ENCODE measurements at regions of chr18 and their contacts with region 1.

Region 1: GRCh38 chr18:54269893-54270844 is 852 bp downstream of the POLI start:
- DNase-seq: no peak
- H3K4me3 Mint-ChIP-seq: peak overlapping the region; percentile 85
- H3K27ac Mint-ChIP-seq: peak overlapping the region; percentile 97
- H3K4me1 Mint-ChIP-seq: peaks cover 26% of the 10 kb centered on the region
- H3K27me3 Mint-ChIP-seq: no peaks in the 10 kb centered on the region

Region 2: GRCh38 chr18:54086046-54086802 is 183.9 kb before region 1 on chr18:
- intact Hi-C with region 1: no loop called
- DNase-seq: peak; percentile 14
- H3K4me3 Mint-ChIP-seq: peak overlapping the region; percentile 18
- H3K27ac Mint-ChIP-seq: peak overlapping the region; percentile 49
- H3K4me1 Mint-ChIP-seq: peaks cover 32% of the 10 kb centered on the region
- H3K27me3 Mint-ChIP-seq: no peaks in the 10 kb centered on the region

Region 3: DNA sequence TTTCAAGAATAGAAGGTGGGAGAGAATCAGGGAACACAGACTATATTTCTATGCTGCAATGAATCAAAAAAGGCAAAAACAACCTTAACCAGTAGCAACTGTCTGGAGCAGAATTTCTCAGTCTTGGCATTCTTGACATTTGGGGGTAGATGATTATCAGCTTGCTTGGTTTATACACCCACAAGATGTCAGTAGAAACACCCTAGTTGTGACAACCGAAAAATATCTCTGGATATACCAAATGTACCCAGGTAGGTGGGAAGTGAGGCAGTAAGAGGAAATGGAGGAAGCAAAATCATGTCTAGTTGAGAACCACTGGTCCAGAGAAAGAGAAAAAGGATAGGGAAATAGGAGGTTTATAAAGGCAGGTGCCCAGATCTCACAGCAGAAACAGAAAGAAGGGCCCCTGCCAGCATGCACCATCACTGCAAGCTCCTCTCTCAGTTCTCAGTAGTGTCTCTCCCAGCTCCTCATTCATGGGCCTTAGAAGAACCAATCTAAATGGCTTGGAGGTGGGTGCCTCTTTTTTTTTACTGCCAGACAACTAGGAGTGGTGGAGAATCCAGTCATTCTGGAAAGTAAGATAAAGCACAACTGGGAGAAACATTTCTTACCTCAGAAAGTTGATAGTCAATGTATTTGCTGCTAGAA is 96.1 kb before region 1 on chr18:
- intact Hi-C with region 1: loop called (anchors 1 kb)
- DNase-seq: no peak
- H3K4me3 Mint-ChIP-seq: peak overlapping the region; percentile 41
- H3K27ac Mint-ChIP-seq: peak overlapping the region; percentile 94
- H3K4me1 Mint-ChIP-seq: peaks cover 61% of the 10 kb centered on the region
- H3K27me3 Mint-ChIP-seq: no peaks in the 10 kb centered on the region

Region 4: GRCh38 chr18:54240629-54241107 is 29.5 kb before region 1 on chr18:
- intact Hi-C with region 1: no loop called
- DNase-seq: no peak
- H3K4me3 Mint-ChIP-seq: no peak overlapping the region
- H3K27ac Mint-ChIP-seq: no peak overlapping the region
- H3K4me1 Mint-ChIP-seq: no peaks in the 10 kb centered on the region
- H3K27me3 Mint-ChIP-seq: peaks cover 9% of the 10 kb centered on the region

Region 5: GRCh38 chr18:54296062-54296461 is 25.9 kb after region 1 on chr18:
- intact Hi-C with region 1: no loop called
- DNase-seq: no peak
- H3K4me3 Mint-ChIP-seq: no peak overlapping the region
- H3K27ac Mint-ChIP-seq: no peak overlapping the region
- H3K4me1 Mint-ChIP-seq: no peaks in the 10 kb centered on the region
- H3K27me3 Mint-ChIP-seq: no peaks in the 10 kb centered on the region

Region 6: GRCh38 chr18:54433857-54434256 is 163.7 kb after region 1 on chr18:
- intact Hi-C with region 1: no loop called
- DNase-seq: no peak
- H3K4me3 Mint-ChIP-seq: no peak overlapping the region
- H3K27ac Mint-ChIP-seq: no peak overlapping the region
- H3K4me1 Mint-ChIP-seq: no peaks in the 10 kb centered on the region
- H3K27me3 Mint-ChIP-seq: peaks cover 15% of the 10 kb centered on the region

Region 7: DNA sequence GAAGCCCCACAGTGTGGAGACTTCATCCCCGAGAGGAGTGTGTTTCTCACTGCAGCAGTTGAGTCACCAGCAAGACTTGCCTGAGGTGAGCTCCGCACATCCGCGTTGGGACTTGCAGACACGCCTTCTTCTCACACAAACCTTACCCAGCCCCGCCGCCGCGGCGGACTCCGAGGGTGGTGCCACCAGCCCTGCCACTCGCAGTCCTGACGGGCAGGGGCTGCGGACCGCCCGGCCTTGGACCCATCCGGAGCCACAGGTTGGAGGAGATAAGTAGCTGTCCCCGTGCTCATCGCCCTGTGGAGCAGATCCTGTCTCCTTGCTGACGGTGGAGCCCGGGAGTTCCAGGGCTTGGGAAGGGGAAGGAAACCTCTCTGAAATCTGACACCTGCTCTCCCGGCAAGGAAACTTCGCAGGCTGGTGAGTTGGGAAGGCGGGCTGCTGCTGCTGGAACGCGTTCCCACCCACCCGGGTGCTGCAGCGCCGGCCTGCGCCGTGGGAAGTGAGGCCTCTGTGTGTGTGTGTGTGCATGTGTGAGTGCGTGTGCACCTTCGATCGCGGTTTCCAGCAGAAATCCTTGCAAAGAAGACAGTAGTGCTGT is 558.2 kb after region 1 on chr18 and contains the start of gene RAB27B:
- intact Hi-C with region 1: loop called (anchors 10 kb)
- DNase-seq: peak; percentile 60
- H3K4me3 Mint-ChIP-seq: peak within 1 kb of the TSS; percentile 82
- H3K27ac Mint-ChIP-seq: peak within 1 kb of the TSS; percentile 3
- H3K4me1 Mint-ChIP-seq: peaks cover 19% of the 10 kb centered on the region
- H3K27me3 Mint-ChIP-seq: peaks cover 25% of the 10 kb centered on the region
- total RNA-seq, gene RAB27B: 0.75 and 0.92 TPM in 2 replicates

Measured in activated T-helper 2 cell treated with anti-CD3 and anti-CD28 coated beads, Interferon-gamma antibody, Interleukin-2, Interleukin-4, amounts not matched to agents 10 μg/mL and 5 μg/mL and 100 μg/mL, durations not matched to agents 14 hours and 24 hours and 36 hours (primary cell).